ENCODE measurements at regions of chr20 and their contacts with region 1.

Region 1: GRCh38 chr20:31406115-31406514 is at the start of gene DEFB121:
- DNase-seq: no peak
- H3K4me3 ChIP-seq: no peak within 1 kb of the TSS
- H3K27ac ChIP-seq: no peak within 1 kb of the TSS
- H3K4me1 ChIP-seq: no peaks in the 10 kb centered on the region
- H3K27me3 ChIP-seq: no peaks in the 10 kb centered on the region
- CTCF ChIP-seq: no peak
- EP300 ChIP-seq: no peak
- POLR2A ChIP-seq: no peak
- total RNA-seq, gene DEFB121: not detected

Region 2: DNA sequence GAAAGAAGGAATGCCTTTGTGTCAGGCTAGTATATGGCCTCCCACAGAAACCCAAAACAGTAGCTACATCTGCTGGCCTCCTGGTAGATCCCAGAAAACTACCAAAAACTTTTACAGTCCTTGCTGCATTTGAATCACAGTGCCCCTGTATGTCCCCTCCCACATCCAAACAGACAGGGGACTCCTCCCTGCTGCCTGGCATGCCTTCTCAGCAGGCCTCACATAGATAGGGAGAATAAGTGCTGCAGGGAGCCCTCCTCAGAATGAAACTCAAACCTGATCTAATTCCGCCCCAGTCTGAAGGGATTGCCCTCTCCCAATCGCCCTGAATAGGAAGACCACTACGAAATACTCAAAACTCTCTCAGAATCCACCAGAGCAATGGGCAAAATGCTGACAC is 83.6 kb before region 1 on chr20:
- in situ Hi-C with region 1: loop called in 1 of 4 experiments (anchors 25 kb)
- intact Hi-C with region 1: no loop called
- DNase-seq: no peak
- H3K4me3 ChIP-seq: no peak overlapping the region
- H3K27ac ChIP-seq: no peak overlapping the region
- H3K4me1 ChIP-seq: no peaks in the 10 kb centered on the region
- H3K27me3 ChIP-seq: no peaks in the 10 kb centered on the region
- CTCF ChIP-seq: no peak
- EP300 ChIP-seq: no peak
- POLR2A ChIP-seq: no peak